K562 (cell line): ENCODE measurements at regions of chr17 and their contacts with region 1.

Region 1: DNA sequence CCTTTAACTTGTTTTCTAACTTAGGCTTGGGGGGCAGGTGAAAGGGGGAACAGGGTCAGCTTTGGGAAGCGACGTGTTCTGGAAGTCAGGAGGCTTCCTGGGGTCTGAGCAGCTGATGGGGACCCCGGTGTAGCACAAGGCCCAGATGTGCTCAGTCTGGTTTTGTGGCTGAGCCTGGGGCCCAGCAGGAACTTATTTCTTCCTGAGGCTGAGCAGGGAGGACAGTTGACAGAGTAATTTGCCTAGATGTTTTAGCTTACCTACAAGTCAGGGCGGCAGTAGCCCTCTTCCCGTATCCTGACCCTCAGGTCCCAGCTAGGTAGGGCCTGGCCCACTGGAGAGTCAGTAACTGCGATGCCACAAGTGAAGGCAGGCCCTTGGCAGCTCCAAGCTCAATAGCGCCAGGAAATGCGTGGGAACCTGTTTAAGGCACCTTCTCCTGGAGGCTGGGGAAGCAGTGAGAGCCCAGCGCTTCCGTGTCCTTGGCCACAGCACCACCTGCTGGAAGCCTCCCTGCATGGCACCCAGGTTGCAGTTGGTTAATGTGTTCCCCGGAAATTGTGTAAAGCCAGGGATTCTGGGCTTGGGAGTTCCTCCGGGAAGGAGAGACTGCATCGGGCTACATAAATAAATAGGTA is 5.2 kb downstream of the CCR7 start:
- DNase-seq: peak; percentile 91 to 94 (median 92)
- ATAC-seq: peak; percentile 89
- H3K4me3 ChIP-seq: peak overlapping the region; percentile 26
- H3K27ac ChIP-seq: peak overlapping the region; percentile 30; the same call in 2 of the 3 replicates
- H3K4me1 ChIP-seq: peaks cover 29 to 36% of the 10 kb centered on the region in 2 experiments
- H3K27me3 ChIP-seq: peaks cover 5 to 16% of the 10 kb centered on the region in 2 experiments; a peak in 2 of 5 replicates
- CTCF ChIP-seq: peak; percentile 95 to 99 (median 98)
- EP300 ChIP-seq: peak; percentile 33; the same call in 1 of the 2 replicates
- POLR2A ChIP-seq: no peak
- RAD21 ChIP-seq: peak; percentile 88 to 97

Region 2: GRCh38 chr17:40536295-40537171 is 23.5 kb before region 1 on chr17:
- CTCF ChIA-PET with region 1: interaction called, 7 read pairs
- POLR2A ChIA-PET with region 1: interaction called, 9 read pairs
- in situ Hi-C with region 1: no loop called
- intact Hi-C with region 1: loop called (anchors 2 kb)
- DNase-seq: peak; percentile 86 to 94 (median 88)
- ATAC-seq: peak; percentile 80
- H3K4me3 ChIP-seq: no peak overlapping the region
- H3K27ac ChIP-seq: peak overlapping the region; percentile 78
- H3K4me1 ChIP-seq: peaks cover 30 to 55% of the 10 kb centered on the region in 2 experiments
- H3K27me3 ChIP-seq: no peaks in the 10 kb centered on the region
- CTCF ChIP-seq: no peak
- EP300 ChIP-seq: peak; percentile 87
- POLR2A ChIP-seq: no peak
- RAD21 ChIP-seq: no peak

Region 3: DNA sequence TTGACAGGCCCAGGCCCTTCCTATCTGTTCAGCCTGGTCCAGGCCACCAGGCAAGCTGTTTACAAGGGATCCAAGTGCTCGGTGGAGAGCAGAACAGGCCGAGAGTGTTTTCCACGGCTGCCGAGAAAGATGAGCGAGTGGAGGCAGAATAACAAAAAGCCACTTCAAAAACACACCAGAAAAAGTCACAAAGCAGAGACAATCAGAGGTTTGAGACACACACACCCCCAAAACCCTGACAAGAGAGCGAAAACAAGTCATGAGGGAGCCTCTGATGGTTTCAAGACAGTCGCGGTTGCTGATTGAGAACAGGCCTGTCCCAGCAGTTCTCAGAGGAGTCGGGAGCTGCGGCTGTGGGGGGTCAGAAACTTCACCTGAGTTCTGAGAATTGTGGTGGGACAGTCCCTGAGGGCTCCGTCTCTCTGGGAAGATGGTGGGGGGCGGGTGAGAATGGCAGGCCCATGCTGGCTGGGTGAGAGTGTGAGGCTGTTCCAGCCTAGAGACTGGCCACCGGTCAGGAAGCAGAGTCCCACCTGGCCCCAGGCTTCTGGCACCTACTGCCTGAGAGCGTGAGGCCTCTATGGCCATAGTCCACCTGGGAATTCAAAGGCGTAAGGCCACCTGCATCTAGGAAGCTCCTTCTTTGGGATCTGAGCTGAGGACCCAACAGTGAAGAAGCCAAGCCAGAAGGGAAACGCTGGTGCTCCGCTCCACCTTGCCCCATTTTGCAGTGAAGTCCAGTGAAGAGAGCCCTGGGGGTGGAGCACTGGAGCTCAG is 42.9 kb after region 1 on chr17:
- CTCF ChIA-PET with region 1: no interaction called
- POLR2A ChIA-PET with region 1: no interaction called
- in situ Hi-C with region 1: no loop called
- intact Hi-C with region 1: no loop called
- DNase-seq: no peak
- ATAC-seq: no peak
- H3K4me3 ChIP-seq: no peak overlapping the region
- H3K27ac ChIP-seq: no peak overlapping the region
- H3K4me1 ChIP-seq: no peaks in the 10 kb centered on the region; a peak in 1 of 5 replicates
- H3K27me3 ChIP-seq: peaks cover 6 to 25% of the 10 kb centered on the region in 2 experiments; a peak in 3 of 5 replicates
- CTCF ChIP-seq: no peak
- EP300 ChIP-seq: no peak
- POLR2A ChIP-seq: no peak
- RAD21 ChIP-seq: no peak